Dorsolateral prefrontal cortex (tissue), 120 donors: ENCODE measurements at regions of chr1 and their contacts with region 1.

Region 1: GRCh38 chr1:9196129-9197040 is 38.2 kb upstream of the H6PD start:
- DNase-seq: peak; percentile 43 to 83 (median 74)
- H3K4me3 ChIP-seq: peak overlapping the region in 45 of 59 donors; percentile 0 to 52 (median 23)
- H3K27ac ChIP-seq: peak overlapping the region in 45 of 59 donors; percentile 1 to 78 (median 44)
- H3K27me3 ChIP-seq: peaks cover 0 to 39% (median 3%) of the 10 kb centered on the region in 45 donors
- CTCF ChIP-seq: peak; percentile 62 to 95 (median 86)

Region 2: DNA sequence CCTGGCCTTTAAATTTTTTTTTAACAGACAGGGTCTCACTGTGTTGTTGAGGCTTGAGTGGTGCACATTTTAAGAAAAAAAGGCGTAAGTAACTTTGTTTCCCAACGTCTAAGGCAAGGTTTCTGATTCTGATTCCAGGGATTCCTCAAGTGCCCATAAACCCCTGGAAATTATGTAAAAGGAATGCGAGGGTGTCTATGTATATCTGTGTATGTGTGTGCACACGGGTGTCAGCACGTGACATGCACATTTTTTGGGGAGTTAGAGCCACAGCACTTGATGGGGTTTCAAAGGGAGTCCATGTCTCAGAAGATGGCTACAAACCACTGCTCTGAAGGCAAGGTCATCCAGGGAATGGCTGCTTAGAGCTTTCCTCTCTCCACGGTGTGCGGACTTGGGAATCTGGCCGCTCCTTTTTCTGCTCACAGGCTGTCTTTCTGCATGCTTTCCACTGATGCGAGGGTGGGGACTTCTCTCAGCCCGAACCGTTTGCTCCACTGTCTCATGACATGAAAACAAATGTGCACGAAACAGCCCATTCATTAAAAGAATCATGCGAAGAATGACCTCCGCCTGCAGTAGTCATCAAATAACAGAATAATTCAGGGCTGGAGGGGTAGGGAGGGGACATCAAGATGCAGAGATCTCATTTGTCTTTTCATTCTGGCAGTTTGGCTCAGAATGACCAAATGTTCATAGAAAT is 360.3 kb before region 1 on chr1:
- intact Hi-C with region 1: no loop called
- DNase-seq: peak in 1 of 10 donors; percentile 29
- H3K4me3 ChIP-seq: peak overlapping the region in 37 of 59 donors; percentile 1 to 53 (median 31)
- H3K27ac ChIP-seq: peak overlapping the region in 24 of 59 donors; percentile 1 to 76 (median 38)
- H3K27me3 ChIP-seq: no peaks in the 10 kb centered on the region
- CTCF ChIP-seq: no peak

Region 3: DNA sequence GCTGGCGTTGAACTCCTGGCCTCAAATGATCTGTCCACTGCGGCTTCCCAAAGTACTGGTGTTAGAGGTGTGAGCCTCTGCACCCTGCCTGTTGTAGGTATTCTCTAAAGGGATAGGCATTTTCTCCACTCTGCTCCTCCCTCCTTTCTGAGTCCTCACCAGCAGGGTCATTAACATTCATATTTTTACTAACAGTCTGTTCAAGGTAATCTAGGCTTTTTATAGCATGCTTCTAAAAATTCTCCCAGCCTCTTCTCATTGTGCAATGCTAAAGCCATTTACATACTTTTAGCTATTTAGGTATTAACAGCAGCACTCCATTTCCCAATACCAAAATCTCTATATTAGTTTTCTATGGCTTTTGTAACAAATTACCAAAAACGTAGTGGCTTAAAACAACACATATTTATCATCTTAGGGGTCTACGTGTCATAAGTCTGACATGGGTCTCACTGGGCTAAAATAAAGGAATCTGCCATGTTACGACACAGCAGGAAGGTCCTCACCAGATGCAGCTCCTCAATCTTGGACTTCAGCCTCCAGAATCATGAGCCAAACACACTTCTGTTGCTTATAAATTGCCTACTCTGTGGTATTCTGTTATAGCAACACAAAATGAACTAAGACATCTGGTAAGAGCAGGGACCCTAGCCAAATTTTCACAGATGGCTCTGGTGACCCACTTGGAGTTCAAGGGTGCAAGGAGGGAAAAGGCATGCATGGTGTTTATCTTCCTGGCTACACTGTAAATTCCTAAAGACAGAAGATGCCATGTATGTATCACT is 167.3 kb before region 1 on chr1:
- intact Hi-C with region 1: no loop called
- DNase-seq: no peak
- H3K4me3 ChIP-seq: no peak overlapping the region
- H3K27ac ChIP-seq: no peak overlapping the region
- H3K27me3 ChIP-seq: peaks cover 0 to 3% (median 0%) of the 10 kb centered on the region in 45 donors
- CTCF ChIP-seq: no peak

Region 4: GRCh38 chr1:9110669-9111356 is 85.6 kb before region 1 on chr1:
- intact Hi-C with region 1: loop called (anchors 1 to 2 kb)
- DNase-seq: peak; percentile 65 to 94 (median 89)
- H3K4me3 ChIP-seq: no peak overlapping the region
- H3K27ac ChIP-seq: no peak overlapping the region
- H3K27me3 ChIP-seq: peaks cover 0 to 3% (median 0%) of the 10 kb centered on the region in 45 donors
- CTCF ChIP-seq: peak; percentile 80 to 97 (median 92)

Region 5: GRCh38 chr1:9143250-9143649 is 53.1 kb before region 1 on chr1:
- intact Hi-C with region 1: loop called (anchors 2 kb)
- DNase-seq: peak in 1 of 10 donors; percentile 26
- H3K4me3 ChIP-seq: no peak overlapping the region
- H3K27ac ChIP-seq: no peak overlapping the region
- H3K27me3 ChIP-seq: no peaks in the 10 kb centered on the region
- CTCF ChIP-seq: no peak

Region 6: GRCh38 chr1:9486466-9487140 is 290.2 kb after region 1 on chr1:
- intact Hi-C with region 1: no loop called
- DNase-seq: no peak
- H3K4me3 ChIP-seq: no peak overlapping the region
- H3K27ac ChIP-seq: no peak overlapping the region
- H3K27me3 ChIP-seq: no peaks in the 10 kb centered on the region
- CTCF ChIP-seq: no peak